Activated CD8-positive, alpha-beta memory T cell treated with anti-CD3 and anti-CD28 coated beads, Interleukin-2, amount 10 ng/mL, durations not matched to agents 7 days and 5 days (primary cell): ENCODE measurements at regions of chr19 and their contacts with region 1.

Region 1: GRCh38 chr19:14479975-14480699 is 5.0 kb upstream of the PTGER1 start:
- DNase-seq: peak; percentile 79
- ATAC-seq: peak; percentile 83
- H3K4me3 Mint-ChIP-seq: no peak overlapping the region
- H3K27ac Mint-ChIP-seq: no peak overlapping the region
- H3K4me1 Mint-ChIP-seq: peaks cover 18% of the 10 kb centered on the region
- H3K27me3 Mint-ChIP-seq: no peaks in the 10 kb centered on the region

Region 2: GRCh38 chr19:14413693-14414181 is 66.4 kb before region 1 on chr19:
- CTCF ChIA-PET with region 1: interaction called, 28 read pairs
- DNase-seq: no peak
- ATAC-seq: no peak
- H3K4me3 Mint-ChIP-seq: no peak overlapping the region
- H3K27ac Mint-ChIP-seq: peak overlapping the region; percentile 13
- H3K4me1 Mint-ChIP-seq: peaks cover 73% of the 10 kb centered on the region
- H3K27me3 Mint-ChIP-seq: no peaks in the 10 kb centered on the region

Region 3: DNA sequence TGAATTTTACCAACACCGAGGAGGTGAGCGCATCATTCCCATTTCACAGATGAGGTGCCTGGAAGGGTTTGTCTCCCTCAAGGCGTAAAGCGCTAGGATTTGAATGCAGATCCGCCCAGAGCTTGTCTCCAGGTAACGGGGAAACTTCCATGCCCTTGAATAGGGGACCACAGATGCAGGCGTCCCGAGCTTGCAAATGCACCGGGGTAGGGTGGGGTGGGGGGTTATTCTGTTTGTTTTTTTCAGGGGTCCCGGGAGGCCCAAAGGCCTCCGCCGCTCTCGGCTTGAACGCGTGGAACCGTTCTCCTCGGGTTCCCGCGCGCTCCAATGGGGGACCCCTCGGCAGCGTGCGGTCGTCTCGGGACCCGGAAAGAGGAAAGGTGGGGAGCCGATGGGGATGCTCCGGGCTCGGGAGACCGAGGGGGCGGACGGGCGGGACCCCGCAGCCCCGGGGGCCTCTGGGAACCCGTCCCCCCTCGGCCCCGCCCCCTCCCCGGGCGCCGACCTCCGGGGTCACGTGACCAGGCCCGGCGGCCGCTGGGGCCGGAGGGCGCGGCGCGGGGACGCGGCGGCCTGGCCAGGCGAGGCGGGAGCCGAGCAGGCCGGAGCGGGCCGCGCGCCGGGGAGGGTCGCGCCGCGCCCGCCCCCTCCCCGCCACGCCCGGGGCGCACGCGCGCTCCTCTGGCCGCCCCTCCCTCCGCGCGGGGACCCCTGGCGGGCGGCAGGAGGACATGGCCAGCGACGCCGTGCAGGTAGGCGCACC is 47.2 kb before region 1 on chr19 and contains the start of gene PKN1:
- CTCF ChIA-PET with region 1: interaction called, 90 read pairs
- DNase-seq: peak; percentile 67
- ATAC-seq: peak; percentile 66
- H3K4me3 Mint-ChIP-seq: peak within 1 kb of the TSS; percentile 77
- H3K27ac Mint-ChIP-seq: peak within 1 kb of the TSS; percentile 76
- H3K4me1 Mint-ChIP-seq: peaks cover 32% of the 10 kb centered on the region
- H3K27me3 Mint-ChIP-seq: peaks cover 5% of the 10 kb centered on the region
- total RNA-seq, gene PKN1: 224 to 236 TPM

Region 4: DNA sequence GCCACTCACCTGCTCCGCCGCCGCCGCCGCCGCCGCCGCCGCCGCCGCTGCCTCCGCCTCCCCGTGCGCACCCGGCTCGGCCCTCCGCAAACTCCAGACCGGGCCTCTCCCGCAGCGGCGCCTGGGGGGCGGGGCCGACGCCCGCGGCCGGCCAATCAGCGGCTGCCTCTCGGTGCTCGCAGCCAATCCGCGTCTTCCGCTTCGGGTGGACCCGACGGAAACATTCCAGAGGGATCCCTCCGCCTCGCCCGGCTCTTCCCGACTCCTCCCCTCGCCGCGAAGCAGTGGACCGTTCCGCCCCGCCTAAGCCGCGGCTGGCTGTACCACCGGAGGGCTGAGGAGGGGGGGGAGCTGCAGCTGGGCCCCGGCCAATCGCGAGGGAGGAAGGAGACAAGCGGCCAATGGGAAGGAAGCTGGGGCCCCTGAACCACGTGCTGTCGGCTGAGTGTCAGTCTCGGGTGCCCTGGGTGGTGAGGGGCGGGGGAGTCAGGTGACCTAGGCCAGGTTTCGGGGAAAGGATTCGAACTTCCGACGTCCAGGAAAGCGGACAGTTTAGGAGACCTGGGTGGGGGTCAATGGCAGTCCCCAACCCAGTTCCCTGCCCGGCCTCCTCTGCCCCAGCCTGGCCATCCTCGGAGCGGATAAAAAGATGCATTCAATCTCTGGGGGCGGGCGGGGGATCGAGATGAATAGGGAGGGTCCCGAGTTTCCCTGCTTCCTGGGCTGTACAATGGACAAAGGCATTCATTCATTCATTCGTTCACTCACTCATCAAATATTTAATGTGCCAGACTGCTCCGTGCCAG is 16.1 kb after region 1 on chr19 and contains the start of gene GIPC1:
- CTCF ChIA-PET with region 1: interaction called, 17 read pairs
- DNase-seq: peak; percentile 83
- ATAC-seq: peak; percentile 96
- H3K4me3 Mint-ChIP-seq: peak within 1 kb of the TSS; percentile 78
- H3K27ac Mint-ChIP-seq: peak within 1 kb of the TSS; percentile 24
- H3K4me1 Mint-ChIP-seq: peaks cover 18% of the 10 kb centered on the region
- H3K27me3 Mint-ChIP-seq: peaks cover 7% of the 10 kb centered on the region
- total RNA-seq, gene GIPC1: 26.2 to 30.8 TPM

Region 5: GRCh38 chr19:14655726-14656125 is 175.6 kb after region 1 on chr19:
- CTCF ChIA-PET with region 1: no interaction called
- DNase-seq: no peak
- ATAC-seq: no peak
- H3K4me3 Mint-ChIP-seq: no peak overlapping the region
- H3K27ac Mint-ChIP-seq: no peak overlapping the region
- H3K4me1 Mint-ChIP-seq: no peaks in the 10 kb centered on the region
- H3K27me3 Mint-ChIP-seq: peaks cover 7% of the 10 kb centered on the region

Region 6: GRCh38 chr19:14718522-14719113 is 238.5 kb after region 1 on chr19:
- CTCF ChIA-PET with region 1: no interaction called
- DNase-seq: no peak
- ATAC-seq: no peak
- H3K4me3 Mint-ChIP-seq: no peak overlapping the region
- H3K27ac Mint-ChIP-seq: no peak overlapping the region
- H3K4me1 Mint-ChIP-seq: no peaks in the 10 kb centered on the region
- H3K27me3 Mint-ChIP-seq: no peaks in the 10 kb centered on the region